Right cardiac atrium (tissue), 5 donors: ENCODE measurements at regions of chr3 and their contacts with region 1.

Region 1: DNA sequence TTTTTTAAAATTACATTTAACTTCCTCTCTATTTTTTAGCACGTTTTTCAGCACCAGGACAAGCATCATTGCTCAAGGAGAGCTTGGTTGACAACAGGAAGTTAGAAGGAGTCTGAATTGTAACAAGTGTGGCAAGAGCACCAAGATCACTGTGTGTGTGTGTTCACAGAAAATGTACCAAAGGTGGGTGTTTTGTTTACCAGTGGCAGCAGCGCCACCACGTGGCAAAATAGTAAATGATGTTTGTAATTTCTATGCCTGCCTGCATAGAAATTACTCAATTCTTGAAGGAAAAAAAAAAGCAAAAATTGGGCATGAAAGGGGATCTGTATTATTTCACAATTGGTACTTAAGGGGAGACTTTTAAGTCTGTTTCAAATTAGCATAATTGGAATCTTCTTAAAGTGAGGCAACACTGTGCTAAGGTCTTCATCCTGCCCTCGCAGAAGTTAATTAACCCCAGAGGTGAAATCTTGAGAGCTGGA is 7.4 kb upstream of the U2SURP start:
- DNase-seq: peak; percentile 57 to 76 (median 74)
- ATAC-seq: peak; percentile 25 to 60
- H3K4me3 ChIP-seq: no peak overlapping the region
- H3K27ac ChIP-seq: no peak overlapping the region
- H3K4me1 ChIP-seq: no peaks in the 10 kb centered on the region
- H3K27me3 ChIP-seq: no peaks in the 10 kb centered on the region

Region 2: GRCh38 chr3:142586803-142587406 is 407.1 kb before region 1 on chr3:
- intact Hi-C with region 1: loop called in 3 of 4 experiments (anchors 5 to 10 kb)
- DNase-seq: no peak
- ATAC-seq: peak; percentile 77 to 78
- H3K4me3 ChIP-seq: no peak overlapping the region
- H3K27ac ChIP-seq: no peak overlapping the region
- H3K4me1 ChIP-seq: no peaks in the 10 kb centered on the region
- H3K27me3 ChIP-seq: no peaks in the 10 kb centered on the region

Region 3: DNA sequence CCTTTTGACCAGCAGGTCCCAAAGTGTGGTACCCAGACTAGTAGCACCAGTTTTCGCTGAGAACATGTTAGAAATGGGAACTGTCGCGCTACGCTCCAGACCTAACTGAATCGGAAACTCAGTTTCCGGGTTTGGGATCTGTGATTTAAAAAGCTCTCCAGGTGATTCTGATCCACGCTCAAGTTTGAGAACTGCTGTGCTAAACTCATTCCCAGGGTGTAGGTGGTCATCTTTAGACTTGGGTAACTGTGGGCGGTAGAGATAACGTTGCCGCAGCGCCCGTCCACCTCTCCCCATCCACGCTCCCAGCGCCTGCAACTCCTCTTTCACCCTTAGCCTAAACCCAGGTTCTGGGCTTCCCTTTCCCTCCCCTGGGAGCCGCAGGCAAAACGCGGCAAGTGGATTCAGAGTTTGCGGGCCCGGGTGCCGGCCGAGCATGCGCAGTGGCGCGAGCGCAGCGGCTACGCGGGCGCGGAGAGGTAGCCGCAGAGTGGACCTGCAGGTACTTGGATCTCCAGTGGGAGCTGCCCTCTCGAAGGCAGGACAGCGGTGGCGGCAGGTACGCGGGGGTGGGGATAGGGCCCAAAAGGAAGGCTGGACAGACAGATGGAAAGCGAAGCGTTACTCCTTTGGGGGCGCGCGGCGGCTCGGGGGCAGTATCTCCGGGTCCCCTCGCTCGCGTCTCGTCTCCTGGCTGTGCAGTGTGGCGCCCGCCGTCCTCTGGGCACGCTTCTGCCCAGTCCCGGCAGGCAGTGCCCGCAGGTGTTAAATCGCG is 397.9 kb before region 1 on chr3 and contains the start of gene PLS1:
- intact Hi-C with region 1: loop called in 1 of 4 experiments (anchors 5 kb)
- DNase-seq: peak; percentile 71 to 92 (median 90)
- ATAC-seq: peak; percentile 94 to 97
- H3K4me3 ChIP-seq: peak within 1 kb of the TSS; percentile 48
- H3K27ac ChIP-seq: no peak within 1 kb of the TSS
- H3K4me1 ChIP-seq: no peaks in the 10 kb centered on the region
- H3K27me3 ChIP-seq: no peaks in the 10 kb centered on the region
- total RNA-seq, gene PLS1: 1.2 to 2.4 (median 1.4) TPM

Region 4: GRCh38 chr3:142828703-142829305 is 165.2 kb before region 1 on chr3:
- intact Hi-C with region 1: loop called (anchors 5 kb)
- DNase-seq: peak; percentile 80 to 94 (median 89)
- ATAC-seq: peak; percentile 94 to 95
- H3K4me3 ChIP-seq: no peak overlapping the region
- H3K27ac ChIP-seq: no peak overlapping the region
- H3K4me1 ChIP-seq: no peaks in the 10 kb centered on the region
- H3K27me3 ChIP-seq: no peaks in the 10 kb centered on the region

Region 5: DNA sequence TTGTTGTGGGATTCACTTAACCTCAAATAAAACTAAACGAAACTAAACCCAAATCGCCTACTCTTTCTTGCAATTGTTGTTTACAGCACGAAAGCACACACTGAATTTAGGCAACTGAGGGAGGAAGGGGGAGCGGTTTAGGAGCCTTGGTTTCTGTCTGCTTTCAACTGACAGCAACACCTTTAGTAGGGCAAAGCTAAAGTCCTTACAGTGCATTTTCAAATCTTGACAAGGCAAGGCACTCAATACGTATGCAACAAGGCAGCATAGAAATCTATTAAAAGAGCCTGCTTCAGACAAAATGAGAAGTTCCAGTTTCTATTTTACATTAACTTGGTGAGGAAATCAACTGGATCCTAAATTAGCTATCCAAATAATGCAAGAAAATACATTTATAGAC is 300.2 kb after region 1 on chr3:
- intact Hi-C with region 1: no loop called
- DNase-seq: no peak
- ATAC-seq: no peak
- H3K4me3 ChIP-seq: no peak overlapping the region
- H3K27ac ChIP-seq: no peak overlapping the region
- H3K4me1 ChIP-seq: peaks cover 3% of the 10 kb centered on the region
- H3K27me3 ChIP-seq: no peaks in the 10 kb centered on the region